ENCODE measurements at regions of chr7 and their contacts with region 1.

Region 1: DNA sequence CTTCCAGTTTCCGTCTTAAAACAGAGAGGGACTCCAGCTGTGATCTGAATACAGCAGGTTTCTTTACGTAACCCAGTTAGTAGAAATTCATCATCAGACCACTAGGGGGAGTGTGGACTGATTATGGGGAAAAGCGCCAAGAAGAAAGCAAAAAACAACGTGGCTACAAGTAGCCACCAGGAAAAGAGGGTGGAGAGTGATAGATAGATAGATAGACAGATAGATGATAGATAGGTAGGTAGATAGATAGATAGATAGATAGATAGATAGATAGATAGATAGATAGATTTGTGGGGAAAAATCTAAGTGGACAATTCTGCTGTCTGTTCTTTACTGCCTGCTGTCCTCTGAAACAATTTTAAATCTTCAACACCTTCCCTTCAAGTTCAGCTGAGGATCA is 12.7 kb upstream of the AKR1B10 start:
- DNase-seq: peak in 7 of 9 donors; percentile 32 to 67 (median 57)
- ATAC-seq: peak; percentile 81
- H3K4me3 ChIP-seq: no peak overlapping the region
- H3K4me3 Mint-ChIP-seq: peak overlapping the region in 1 of 10 donors; percentile 49
- H3K27ac ChIP-seq: no peak overlapping the region
- H3K27ac Mint-ChIP-seq: no peak overlapping the region
- H3K4me1 ChIP-seq: no peaks in the 10 kb centered on the region
- H3K4me1 Mint-ChIP-seq: peaks cover 4 to 6% (median 5%) of the 10 kb centered on the region in 7 donors
- H3K27me3 ChIP-seq: no peaks in the 10 kb centered on the region
- H3K27me3 Mint-ChIP-seq: peaks cover 6 to 21% (median 14%) of the 10 kb centered on the region in 5 donors

Region 2: DNA sequence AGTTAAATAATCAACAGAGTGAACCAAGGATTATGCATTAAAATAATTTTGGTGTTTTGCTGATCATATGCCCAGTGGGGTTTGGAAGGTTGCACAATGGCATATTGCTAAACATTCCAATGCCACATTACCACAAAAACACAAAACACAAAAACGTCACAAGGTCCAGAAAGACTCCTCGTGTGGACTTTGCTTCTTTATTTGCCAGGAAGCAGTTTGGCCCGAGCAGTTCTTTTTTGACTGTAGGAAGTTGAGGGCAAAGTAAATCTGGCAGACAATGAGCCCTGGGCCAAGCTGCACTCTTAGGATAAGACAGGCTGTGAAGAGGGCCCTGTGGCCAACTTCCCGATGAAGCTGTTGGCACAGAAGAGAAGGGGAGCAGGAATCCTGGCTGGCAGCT is 158.7 kb before region 1 on chr7:
- CTCF ChIA-PET with region 1: no interaction called
- POLR2A ChIA-PET with region 1: no interaction called
- intact Hi-C with region 1: loop called in 1 of 2 experiments (anchors 5 kb)
- DNase-seq: no peak
- ATAC-seq: no peak
- H3K4me3 ChIP-seq: no peak overlapping the region
- H3K4me3 Mint-ChIP-seq: no peak overlapping the region
- H3K27ac ChIP-seq: no peak overlapping the region
- H3K27ac Mint-ChIP-seq: no peak overlapping the region
- H3K4me1 ChIP-seq: no peaks in the 10 kb centered on the region
- H3K4me1 Mint-ChIP-seq: peaks cover 0 to 4% (median 0%) of the 10 kb centered on the region in 7 donors
- H3K27me3 ChIP-seq: no peaks in the 10 kb centered on the region
- H3K27me3 Mint-ChIP-seq: peaks cover 0 to 6% (median 5%) of the 10 kb centered on the region in 5 donors

Region 3: DNA sequence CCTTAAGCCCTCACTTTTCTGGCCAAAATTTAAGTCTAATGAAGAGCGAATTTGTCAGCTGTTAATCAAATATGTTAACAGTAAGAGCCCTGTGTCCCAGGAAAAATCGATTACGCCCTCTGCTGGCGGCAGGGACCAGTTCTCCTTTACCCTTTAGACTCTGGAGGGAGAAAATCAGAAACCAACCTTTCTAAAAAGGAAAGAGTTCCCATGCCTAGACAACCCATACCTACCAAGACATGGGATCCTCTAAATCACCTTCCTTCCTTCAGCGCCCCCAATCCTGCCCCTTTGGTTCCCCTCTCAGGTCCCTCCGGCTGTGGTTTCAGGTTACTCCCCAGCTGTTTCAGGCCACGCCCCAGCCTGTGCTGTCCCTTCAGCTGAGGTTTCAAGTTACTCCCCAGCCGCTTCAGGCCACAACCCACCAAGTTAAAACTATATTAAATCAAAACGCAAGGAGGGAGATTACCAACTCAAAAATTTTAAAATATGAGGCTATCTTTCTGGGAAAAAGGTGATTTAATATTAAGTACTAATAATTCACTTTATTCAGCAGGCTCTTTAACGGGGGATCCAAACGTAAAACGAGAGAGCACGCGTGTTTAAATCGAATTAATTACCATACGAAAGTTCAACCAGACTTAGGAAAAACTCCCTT is 32.9 kb after region 1 on chr7:
- CTCF ChIA-PET with region 1: interaction called, 3 read pairs
- POLR2A ChIA-PET with region 1: no interaction called
- intact Hi-C with region 1: loop called in 1 of 2 experiments (anchors 2 kb)
- DNase-seq: peak; percentile 11 to 70 (median 54)
- ATAC-seq: peak; percentile 80
- H3K4me3 ChIP-seq: no peak overlapping the region
- H3K4me3 Mint-ChIP-seq: peak overlapping the region in 2 of 10 donors; percentile 19 to 38
- H3K27ac ChIP-seq: no peak overlapping the region
- H3K27ac Mint-ChIP-seq: peak overlapping the region in 1 of 9 donors; percentile 70
- H3K4me1 ChIP-seq: no peaks in the 10 kb centered on the region
- H3K4me1 Mint-ChIP-seq: peaks cover 0 to 7% (median 0%) of the 10 kb centered on the region in 7 donors
- H3K27me3 ChIP-seq: peaks cover 0 to 4% of the 10 kb centered on the region in 2 donors
- H3K27me3 Mint-ChIP-seq: peaks cover 4 to 27% (median 12%) of the 10 kb centered on the region in 5 donors